T-cell (primary cell): ENCODE measurements at regions of chr2 and their contacts with region 1.

Region 1: GRCh38 chr2:6648596-6649247 is 217.0 kb downstream of the CMPK2 start:
- DNase-seq: no peak
- ATAC-seq: no peak
- H3K4me3 ChIP-seq: no peak overlapping the region
- H3K4me3 Mint-ChIP-seq: no peak overlapping the region
- H3K27ac ChIP-seq: no peak overlapping the region
- H3K27ac Mint-ChIP-seq: no peak overlapping the region
- H3K4me1 ChIP-seq: no peaks in the 10 kb centered on the region
- H3K4me1 Mint-ChIP-seq: no peaks in the 10 kb centered on the region
- H3K27me3 ChIP-seq: no peaks in the 10 kb centered on the region
- H3K27me3 Mint-ChIP-seq: peaks cover 0 to 4% of the 10 kb centered on the region in 2 donors

Region 2: GRCh38 chr2:4955944-4956343 is 1692.8 kb before region 1 on chr2:
- CTCF ChIA-PET with region 1: no interaction called
- POLR2A ChIA-PET with region 1: no interaction called
- DNase-seq: no peak
- ATAC-seq: no peak
- H3K4me3 ChIP-seq: no peak overlapping the region
- H3K4me3 Mint-ChIP-seq: no peak overlapping the region
- H3K27ac ChIP-seq: no peak overlapping the region
- H3K27ac Mint-ChIP-seq: no peak overlapping the region
- H3K4me1 ChIP-seq: no peaks in the 10 kb centered on the region
- H3K4me1 Mint-ChIP-seq: no peaks in the 10 kb centered on the region
- H3K27me3 ChIP-seq: no peaks in the 10 kb centered on the region
- H3K27me3 Mint-ChIP-seq: no peaks in the 10 kb centered on the region

Region 3: GRCh38 chr2:5766056-5766455 is 882.7 kb before region 1 on chr2:
- CTCF ChIA-PET with region 1: no interaction called
- POLR2A ChIA-PET with region 1: no interaction called
- DNase-seq: no peak
- ATAC-seq: no peak
- H3K4me3 ChIP-seq: no peak overlapping the region
- H3K4me3 Mint-ChIP-seq: no peak overlapping the region
- H3K27ac ChIP-seq: no peak overlapping the region
- H3K27ac Mint-ChIP-seq: no peak overlapping the region
- H3K4me1 ChIP-seq: no peaks in the 10 kb centered on the region
- H3K4me1 Mint-ChIP-seq: no peaks in the 10 kb centered on the region
- H3K27me3 ChIP-seq: no peaks in the 10 kb centered on the region
- H3K27me3 Mint-ChIP-seq: no peaks in the 10 kb centered on the region

Region 4: GRCh38 chr2:6181537-6182325 is 467.0 kb before region 1 on chr2:
- CTCF ChIA-PET with region 1: interaction called in 1 of 2 experiments, 10 read pairs
- POLR2A ChIA-PET with region 1: no interaction called
- DNase-seq: no peak
- ATAC-seq: no peak
- H3K4me3 ChIP-seq: no peak overlapping the region
- H3K4me3 Mint-ChIP-seq: no peak overlapping the region
- H3K27ac ChIP-seq: no peak overlapping the region
- H3K27ac Mint-ChIP-seq: no peak overlapping the region
- H3K4me1 ChIP-seq: no peaks in the 10 kb centered on the region
- H3K4me1 Mint-ChIP-seq: no peaks in the 10 kb centered on the region
- H3K27me3 ChIP-seq: no peaks in the 10 kb centered on the region
- H3K27me3 Mint-ChIP-seq: peaks cover 1 to 3% of the 10 kb centered on the region in 2 donors

Region 5: GRCh38 chr2:6617794-6618193 is 30.9 kb before region 1 on chr2:
- CTCF ChIA-PET with region 1: no interaction called
- POLR2A ChIA-PET with region 1: no interaction called
- DNase-seq: no peak
- ATAC-seq: no peak
- H3K4me3 ChIP-seq: no peak overlapping the region
- H3K4me3 Mint-ChIP-seq: no peak overlapping the region
- H3K27ac ChIP-seq: no peak overlapping the region
- H3K27ac Mint-ChIP-seq: no peak overlapping the region
- H3K4me1 ChIP-seq: no peaks in the 10 kb centered on the region
- H3K4me1 Mint-ChIP-seq: no peaks in the 10 kb centered on the region
- H3K27me3 ChIP-seq: peaks cover 0 to 2% of the 10 kb centered on the region in 2 experiments
- H3K27me3 Mint-ChIP-seq: peaks cover 4 to 10% of the 10 kb centered on the region in 2 donors

Region 6: DNA sequence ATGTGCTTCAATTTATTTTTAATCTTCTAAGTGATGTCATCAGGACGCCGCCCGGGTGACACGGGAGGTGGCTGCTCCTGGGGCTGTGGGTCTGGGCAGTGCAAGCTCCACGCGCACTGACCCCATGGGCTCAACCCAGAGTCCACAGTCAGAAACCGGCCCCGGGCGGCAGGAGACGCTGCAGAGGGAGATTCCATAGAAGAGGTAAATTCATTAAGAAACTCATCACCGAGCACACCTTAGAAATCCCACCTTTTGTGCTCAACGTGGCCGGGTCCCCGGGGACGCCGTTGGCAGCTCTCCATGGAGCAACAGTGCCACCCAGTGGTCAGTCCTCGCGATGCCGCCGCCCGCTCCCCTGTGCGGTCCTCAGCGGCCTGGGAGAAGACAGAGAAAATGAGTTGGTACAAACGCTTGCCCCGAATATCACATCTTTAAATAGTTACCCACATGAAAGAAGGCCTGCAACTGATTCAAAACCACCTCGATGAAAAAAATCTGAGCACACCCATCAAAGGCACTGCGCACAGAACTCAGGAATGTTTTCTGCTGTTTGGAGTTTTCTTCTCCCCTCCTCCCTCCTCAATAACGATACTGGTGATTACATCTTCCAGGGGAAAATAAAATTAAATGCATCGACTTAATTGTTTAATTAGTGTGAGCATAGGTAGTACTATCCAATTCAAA is 124.4 kb after region 1 on chr2:
- CTCF ChIA-PET with region 1: no interaction called
- POLR2A ChIA-PET with region 1: no interaction called
- DNase-seq: peak; percentile 15 to 75 (median 57)
- ATAC-seq: peak; percentile 60 to 84 (median 76)
- H3K4me3 ChIP-seq: no peak overlapping the region
- H3K4me3 Mint-ChIP-seq: peak overlapping the region in 1 of 3 donors; percentile 50
- H3K27ac ChIP-seq: no peak overlapping the region
- H3K27ac Mint-ChIP-seq: no peak overlapping the region
- H3K4me1 ChIP-seq: peaks cover 0 to 4% of the 10 kb centered on the region in 2 experiments
- H3K4me1 Mint-ChIP-seq: peaks cover 0 to 14% (median 11%) of the 10 kb centered on the region in 3 donors
- H3K27me3 ChIP-seq: peaks cover 6 to 27% of the 10 kb centered on the region in 2 experiments
- H3K27me3 Mint-ChIP-seq: peaks cover 25% of the 10 kb centered on the region in 2 donors